Gastrocnemius medialis (tissue), 4 donors: ENCODE measurements at regions of chr1 and their contacts with region 1.

Region 1: DNA sequence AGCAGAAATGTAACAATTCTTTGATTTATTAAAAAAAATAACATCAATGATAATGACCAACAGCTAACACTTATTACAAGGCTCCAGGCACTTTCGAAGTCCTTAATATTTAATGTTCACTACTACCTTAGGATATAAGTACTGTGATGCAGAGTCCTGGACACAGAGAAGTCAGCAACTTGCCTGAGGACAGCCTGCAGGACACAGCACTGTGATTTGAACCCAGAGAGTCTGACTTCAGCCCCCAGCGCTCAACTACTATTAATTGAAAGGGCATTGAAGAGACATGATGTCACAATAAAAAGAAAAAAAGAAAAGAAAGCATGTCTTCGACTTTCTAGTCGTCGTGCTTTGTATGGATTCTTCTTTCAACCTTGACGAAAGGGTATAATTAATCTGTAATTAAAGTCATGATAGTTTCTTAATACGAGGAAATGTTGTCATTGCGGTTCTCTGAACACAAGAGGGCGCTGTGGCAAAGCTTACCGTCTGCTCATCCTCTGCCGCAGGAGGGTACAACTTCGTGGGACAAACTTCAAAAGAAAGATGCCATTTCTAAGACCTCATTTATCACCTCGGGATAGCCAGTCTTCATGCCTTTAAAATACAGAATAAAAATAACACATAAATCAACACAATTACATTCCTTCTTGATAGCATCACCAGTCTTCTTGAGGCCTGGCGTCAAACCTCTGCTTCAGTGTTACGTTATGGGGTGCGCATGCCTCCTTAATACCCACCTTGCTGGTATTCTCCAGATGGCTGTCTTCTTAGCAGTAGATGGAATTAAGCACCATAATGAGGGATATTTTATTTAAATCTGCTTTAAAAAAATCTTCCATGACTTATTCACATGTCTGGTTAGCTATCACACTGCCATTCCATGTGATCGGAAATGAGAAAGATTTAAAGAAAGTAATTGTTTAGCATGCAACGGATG is 240.1 kb downstream of the DISC1 start:
- DNase-seq: no peak
- ATAC-seq: peak in 1 of 2 donors; percentile 42
- H3K4me3 ChIP-seq: no peak overlapping the region
- H3K27ac ChIP-seq: no peak overlapping the region
- H3K4me1 ChIP-seq: peaks cover 10 to 12% of the 10 kb centered on the region in 2 donors
- H3K27me3 ChIP-seq: no peaks in the 10 kb centered on the region
- CTCF ChIP-seq: peak; percentile 62 to 86 (median 75)
- POLR2A ChIP-seq: no peak

Region 2: DNA sequence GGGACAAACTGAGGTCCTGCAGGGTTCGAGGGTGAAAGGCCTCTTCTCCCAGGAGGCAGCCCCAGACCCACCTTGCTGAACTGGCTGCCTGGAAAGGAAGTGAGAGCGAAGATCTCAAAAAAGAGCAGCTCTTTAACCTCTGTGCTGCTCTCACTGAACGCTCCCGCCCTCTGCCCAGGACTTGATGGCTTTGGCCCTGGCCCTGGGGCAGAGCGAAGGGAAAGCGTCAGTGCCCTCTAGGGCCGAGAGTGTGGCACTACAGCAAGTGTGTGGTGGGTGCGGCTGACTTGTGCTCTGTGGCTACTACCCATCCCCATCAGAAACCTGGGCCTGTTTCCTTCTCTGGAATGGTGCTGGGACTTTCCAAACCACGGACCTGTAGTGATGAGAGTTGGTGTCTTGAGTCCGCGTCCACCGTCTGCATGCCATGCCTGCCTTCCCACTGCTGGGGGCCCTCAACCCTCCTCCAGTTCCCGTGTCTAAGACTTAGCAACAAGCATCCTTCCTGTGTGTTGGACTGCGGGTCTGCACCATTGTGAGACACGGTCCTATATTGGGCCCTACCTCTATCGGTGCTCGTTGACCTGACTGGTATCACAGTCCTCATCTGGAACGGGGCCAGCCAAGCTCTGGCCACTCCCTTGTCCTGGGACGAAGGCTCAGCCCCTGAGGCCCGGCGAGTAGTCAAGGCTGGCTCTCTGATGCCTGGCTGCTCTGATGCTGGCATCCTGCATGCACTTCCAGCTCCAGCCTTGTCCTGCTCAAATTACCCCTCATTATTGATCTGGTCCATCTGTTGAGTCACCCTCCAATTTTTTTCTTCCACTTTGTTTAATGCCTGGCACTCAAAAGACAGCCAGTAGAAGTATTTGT is 59.8 kb before region 1 on chr1:
- in situ Hi-C with region 1: no loop called
- intact Hi-C with region 1: no loop called
- DNase-seq: peak; percentile 15 to 55
- ATAC-seq: peak; percentile 39 to 61
- H3K4me3 ChIP-seq: no peak overlapping the region
- H3K27ac ChIP-seq: peak overlapping the region in 1 of 4 donors; percentile 52
- H3K4me1 ChIP-seq: no peaks in the 10 kb centered on the region
- H3K27me3 ChIP-seq: no peaks in the 10 kb centered on the region
- CTCF ChIP-seq: peak; percentile 47 to 75 (median 54)
- POLR2A ChIP-seq: no peak

Region 3: GRCh38 chr1:232221802-232222499 is 355.3 kb after region 1 on chr1:
- in situ Hi-C with region 1: no loop called
- intact Hi-C with region 1: no loop called
- DNase-seq: no peak
- ATAC-seq: peak; percentile 44 to 54
- H3K4me3 ChIP-seq: no peak overlapping the region
- H3K27ac ChIP-seq: no peak overlapping the region
- H3K4me1 ChIP-seq: no peaks in the 10 kb centered on the region
- H3K27me3 ChIP-seq: no peaks in the 10 kb centered on the region
- CTCF ChIP-seq: no peak
- POLR2A ChIP-seq: no peak

Region 4: GRCh38 chr1:232306269-232306961 is 439.8 kb after region 1 on chr1:
- in situ Hi-C with region 1: no loop called
- intact Hi-C with region 1: loop called (anchors 10 kb)
- DNase-seq: peak in 1 of 2 donors; percentile 36
- ATAC-seq: peak; percentile 55 to 71
- H3K4me3 ChIP-seq: no peak overlapping the region
- H3K27ac ChIP-seq: peak overlapping the region; percentile 6 to 55 (median 41)
- H3K4me1 ChIP-seq: peaks cover 8 to 11% of the 10 kb centered on the region in 2 donors
- H3K27me3 ChIP-seq: no peaks in the 10 kb centered on the region
- CTCF ChIP-seq: peak in 1 of 5 experiments; percentile 17
- POLR2A ChIP-seq: no peak

Region 5: GRCh38 chr1:232620356-232620969 is 753.8 kb after region 1 on chr1:
- in situ Hi-C with region 1: loop called (anchors 10 to 25 kb)
- intact Hi-C with region 1: no loop called
- DNase-seq: peak; percentile 35 to 37
- ATAC-seq: peak; percentile 78 to 84
- H3K4me3 ChIP-seq: peak overlapping the region in 2 of 4 donors; percentile 10 to 30
- H3K27ac ChIP-seq: peak overlapping the region; percentile 38 to 66 (median 56)
- H3K4me1 ChIP-seq: peaks cover 7 to 14% of the 10 kb centered on the region in 2 donors
- H3K27me3 ChIP-seq: no peaks in the 10 kb centered on the region
- CTCF ChIP-seq: no peak
- POLR2A ChIP-seq: peak in 1 of 2 donors; percentile 12

Region 6: GRCh38 chr1:233240829-233241682 is 1374.4 kb after region 1 on chr1:
- in situ Hi-C with region 1: loop called (anchors 10 to 25 kb)
- intact Hi-C with region 1: loop called (anchors 5 kb)
- DNase-seq: peak; percentile 30 to 34
- ATAC-seq: peak; percentile 60 to 76
- H3K4me3 ChIP-seq: peak overlapping the region in 2 of 4 donors; percentile 12 to 23
- H3K27ac ChIP-seq: no peak overlapping the region
- H3K4me1 ChIP-seq: no peaks in the 10 kb centered on the region
- H3K27me3 ChIP-seq: no peaks in the 10 kb centered on the region
- CTCF ChIP-seq: peak; percentile 52 to 84 (median 71)
- POLR2A ChIP-seq: no peak